Posterior vena cava (tissue), 2 donors: ENCODE measurements at regions of chr1 and their contacts with region 1.

Region 1: GRCh38 chr1:44347280-44347679 is 7.8 kb downstream of the ERI3 start:
- DNase-seq: no peak

Region 2: DNA sequence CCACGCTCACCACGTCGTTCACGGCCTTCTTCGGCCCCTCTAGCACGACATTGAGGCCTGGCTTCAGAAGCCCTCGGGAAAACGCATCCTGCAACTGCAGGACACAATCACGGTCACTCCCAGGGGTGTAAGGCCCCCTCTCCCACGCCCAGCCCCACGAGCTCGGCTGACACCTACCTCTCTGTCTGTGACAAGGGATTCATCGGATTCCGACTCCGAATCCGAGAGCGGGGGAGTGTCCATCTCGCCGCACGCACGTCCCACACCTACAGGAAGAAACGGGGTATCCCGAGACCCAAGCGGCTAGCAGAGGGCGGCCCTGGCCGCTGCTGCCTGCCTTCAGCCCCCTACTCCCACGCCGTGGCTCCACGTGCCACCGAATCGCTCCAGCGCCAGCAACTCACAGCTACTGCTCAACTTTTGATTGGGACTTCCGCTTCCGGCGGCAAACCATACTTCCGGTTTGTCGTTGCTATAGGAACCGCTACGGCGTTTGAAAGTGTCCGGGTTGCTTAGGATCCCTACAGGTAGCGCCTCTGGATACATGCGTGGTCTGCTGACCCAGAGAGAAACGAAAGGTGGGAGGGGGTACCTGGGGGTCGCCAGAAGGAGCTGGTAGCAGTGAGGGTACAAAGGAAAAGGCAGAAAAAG is 1175.3 kb before region 1 on chr1 and contains the starts of genes CFAP57 and EBNA1BP2:
- intact Hi-C with region 1: loop called in 1 of 2 experiments (anchors 10 kb)
- DNase-seq: peak; percentile 96
- total RNA-seq, gene CFAP57: 0.09 TPM in 1 of 2 donors, not detected in the other
- total RNA-seq, gene EBNA1BP2: 27.3 to 42.4 TPM

Region 3: GRCh38 chr1:44213222-44214112 is 133.8 kb before region 1 on chr1 and contains the start of gene DMAP1:
- intact Hi-C with region 1: no loop called
- DNase-seq: peak; percentile 95
- total RNA-seq, gene DMAP1: 18.5 to 23.6 TPM

Region 4: DNA sequence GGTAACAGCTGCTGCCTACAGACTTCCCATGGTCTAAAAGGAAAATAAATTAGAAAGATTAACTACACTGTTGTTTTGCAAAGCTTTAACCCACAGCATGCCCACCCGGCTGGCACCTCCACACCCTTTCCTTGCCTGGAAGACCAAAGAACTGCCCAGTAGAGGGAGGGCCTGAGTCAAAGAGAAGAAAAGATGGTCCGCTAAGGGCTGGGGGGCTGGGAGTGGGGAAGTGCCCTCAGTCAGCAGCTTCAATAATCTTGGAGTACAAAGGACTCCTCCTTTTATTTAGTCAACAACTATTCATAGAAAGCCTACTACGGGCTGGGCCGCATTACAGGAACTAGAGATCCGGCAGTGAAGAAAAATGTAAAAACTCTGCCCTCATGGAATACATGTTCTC is 32.8 kb before region 1 on chr1:
- intact Hi-C with region 1: no loop called
- DNase-seq: no peak

Region 5: GRCh38 chr1:44368471-44369151 is 21.3 kb after region 1 on chr1:
- intact Hi-C with region 1: no loop called
- DNase-seq: no peak